ENCODE measurements at regions of chr10 and their contacts with region 1.

Region 1: GRCh38 chr10:22666287-22667092 is 47.9 kb downstream of the PIP4K2A start:
- DNase-seq: peak; percentile 18
- ATAC-seq: peak; percentile 56
- H3K4me3 ChIP-seq: peak overlapping the region in 2 of 3 experiments; percentile 16 to 20; a peak in 2 of 6 replicates
- H3K27ac ChIP-seq: no peak overlapping the region
- H3K4me1 ChIP-seq: peaks cover 58% of the 10 kb centered on the region
- H3K27me3 ChIP-seq: no peaks in the 10 kb centered on the region
- CTCF ChIP-seq: no peak
- EP300 ChIP-seq: no peak; a peak in 1 of 4 replicates
- POLR2A ChIP-seq: no peak
- RAD21 ChIP-seq: no peak

Region 2: DNA sequence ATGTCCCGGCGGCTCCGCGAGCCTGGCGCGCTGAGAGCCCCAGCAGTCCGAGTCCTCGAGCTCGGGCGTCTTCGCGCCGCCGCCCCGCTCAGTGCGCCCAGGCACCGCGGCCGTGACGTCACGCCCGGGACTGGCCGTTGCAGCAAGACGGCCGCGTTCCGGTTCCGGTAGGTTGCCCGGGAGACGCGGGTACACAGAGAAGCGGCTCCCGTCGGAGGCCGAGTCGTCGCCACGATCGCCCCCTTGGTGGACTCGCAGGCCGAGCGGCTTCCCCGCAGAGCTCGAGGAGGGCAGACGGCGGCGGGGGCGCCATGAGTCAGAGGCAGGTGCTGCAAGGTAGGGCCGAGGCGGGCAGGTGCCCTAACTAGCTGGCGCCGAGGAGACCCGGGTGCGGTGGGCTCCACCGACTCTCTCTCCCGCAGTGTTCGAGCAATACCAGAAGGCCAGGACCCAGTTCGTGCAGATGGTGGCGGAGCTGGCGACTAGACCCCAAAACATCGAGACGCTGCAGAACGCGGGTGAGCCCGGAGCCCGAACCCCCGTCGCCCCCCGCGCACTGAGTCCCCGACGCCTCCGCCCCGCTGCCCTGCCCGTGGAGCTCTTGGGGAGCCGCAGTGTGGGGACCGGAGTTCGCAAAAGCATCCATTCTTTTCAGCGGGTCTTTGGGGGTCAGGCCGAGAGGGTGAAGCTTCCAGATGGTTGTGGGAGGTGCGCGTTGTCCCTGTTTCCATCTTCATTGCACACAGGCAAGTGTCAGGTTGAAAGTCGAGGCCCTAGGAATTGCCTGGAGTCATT is 321.0 kb before region 1 on chr10 and contains the start of gene SPAG6:
- CTCF ChIA-PET with region 1: no interaction called
- POLR2A ChIA-PET with region 1: no interaction called
- in situ Hi-C with region 1: no loop called
- intact Hi-C with region 1: no loop called
- DNase-seq: no peak
- ATAC-seq: no peak
- H3K4me3 ChIP-seq: no peak within 1 kb of the TSS
- H3K27ac ChIP-seq: no peak within 1 kb of the TSS
- H3K4me1 ChIP-seq: peaks cover 6% of the 10 kb centered on the region; the same call in 1 of the 2 replicates
- H3K27me3 ChIP-seq: peaks cover 1 to 16% of the 10 kb centered on the region in 2 experiments; a peak in 2 of 5 replicates
- CTCF ChIP-seq: no peak
- EP300 ChIP-seq: no peak
- POLR2A ChIP-seq: no peak
- RAD21 ChIP-seq: no peak
- total RNA-seq, gene SPAG6: not detected in 2 replicates

Region 3: GRCh38 chr10:22629852-22630233 is 36.6 kb before region 1 on chr10:
- CTCF ChIA-PET with region 1: no interaction called
- POLR2A ChIA-PET with region 1: no interaction called
- in situ Hi-C with region 1: no loop called
- intact Hi-C with region 1: loop called (anchors 5 kb)
- DNase-seq: no peak
- ATAC-seq: no peak
- H3K4me3 ChIP-seq: no peak overlapping the region
- H3K27ac ChIP-seq: no peak overlapping the region
- H3K4me1 ChIP-seq: peaks cover 67% of the 10 kb centered on the region
- H3K27me3 ChIP-seq: no peaks in the 10 kb centered on the region
- CTCF ChIP-seq: no peak
- EP300 ChIP-seq: no peak
- POLR2A ChIP-seq: no peak
- RAD21 ChIP-seq: no peak

Region 4: DNA sequence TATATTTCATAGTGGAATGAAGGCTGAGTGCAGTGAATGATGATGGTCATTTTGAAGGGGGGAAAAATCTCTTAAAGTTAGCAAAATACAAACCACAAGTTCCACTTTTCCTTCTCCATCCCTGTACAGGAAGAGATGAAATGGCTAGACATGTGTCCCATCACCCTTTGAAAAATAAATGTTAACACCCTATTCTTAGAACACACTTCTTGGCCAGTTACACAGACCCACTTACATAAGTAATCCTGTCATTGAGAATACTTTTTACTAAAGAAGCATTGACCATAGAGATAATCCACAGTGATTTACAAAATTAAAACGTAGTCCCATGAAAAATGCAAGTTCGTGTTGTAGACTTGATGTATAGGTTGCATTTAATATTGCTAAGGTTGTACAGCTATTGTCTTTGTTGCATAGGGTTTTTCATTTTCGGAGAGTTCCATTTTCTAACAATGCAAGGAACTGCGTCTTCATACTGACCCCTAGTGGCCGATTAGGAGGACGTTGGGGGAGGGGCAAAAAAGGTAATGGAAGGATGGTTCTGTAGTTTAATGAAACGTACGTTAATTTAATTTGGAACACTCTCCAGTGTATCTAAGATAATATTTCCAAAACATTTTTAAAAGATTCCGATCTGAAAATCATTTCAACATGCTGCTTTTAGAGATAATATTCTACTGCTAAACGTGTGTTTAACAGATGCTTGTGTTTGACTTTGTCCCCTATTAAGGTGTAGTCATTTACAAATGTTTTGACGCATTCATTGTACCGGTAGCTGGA is 322.3 kb after region 1 on chr10:
- CTCF ChIA-PET with region 1: no interaction called
- POLR2A ChIA-PET with region 1: no interaction called
- in situ Hi-C with region 1: no loop called
- intact Hi-C with region 1: no loop called
- DNase-seq: peak; percentile 34
- ATAC-seq: peak; percentile 44
- H3K4me3 ChIP-seq: no peak overlapping the region; a peak in 1 of 6 replicates
- H3K27ac ChIP-seq: no peak overlapping the region
- H3K4me1 ChIP-seq: peaks cover 11% of the 10 kb centered on the region; the same call in 1 of the 2 replicates
- H3K27me3 ChIP-seq: peaks cover 2% of the 10 kb centered on the region in 2 experiments; a peak in 1 of 5 replicates
- CTCF ChIP-seq: peak; percentile 85
- EP300 ChIP-seq: no peak
- POLR2A ChIP-seq: no peak
- RAD21 ChIP-seq: peak; percentile 76